CD4-positive, alpha-beta memory T cell (primary cell): ENCODE measurements at regions of chr4 and their contacts with region 1.

Region 1: GRCh38 chr4:40056716-40057585 is at the start of gene N4BP2:
- DNase-seq: peak; percentile 60 to 78 (median 75)
- H3K4me3 ChIP-seq: peak within 1 kb of the TSS; percentile 82 to 100
- H3K4me3 Mint-ChIP-seq: peak within 1 kb of the TSS; percentile 93 to 99 (median 97)
- H3K27ac ChIP-seq: peak within 1 kb of the TSS; percentile 75
- H3K27ac Mint-ChIP-seq: peak within 1 kb of the TSS; percentile 93 to 99 (median 97)
- H3K4me1 ChIP-seq: peaks cover 36% of the 10 kb centered on the region
- H3K4me1 Mint-ChIP-seq: peaks cover 18 to 48% (median 32%) of the 10 kb centered on the region in 4 donors
- H3K27me3 ChIP-seq: no peaks in the 10 kb centered on the region
- H3K27me3 Mint-ChIP-seq: no peaks in the 10 kb centered on the region
- total RNA-seq, gene N4BP2: 15.0 to 16.7 TPM

Region 2: DNA sequence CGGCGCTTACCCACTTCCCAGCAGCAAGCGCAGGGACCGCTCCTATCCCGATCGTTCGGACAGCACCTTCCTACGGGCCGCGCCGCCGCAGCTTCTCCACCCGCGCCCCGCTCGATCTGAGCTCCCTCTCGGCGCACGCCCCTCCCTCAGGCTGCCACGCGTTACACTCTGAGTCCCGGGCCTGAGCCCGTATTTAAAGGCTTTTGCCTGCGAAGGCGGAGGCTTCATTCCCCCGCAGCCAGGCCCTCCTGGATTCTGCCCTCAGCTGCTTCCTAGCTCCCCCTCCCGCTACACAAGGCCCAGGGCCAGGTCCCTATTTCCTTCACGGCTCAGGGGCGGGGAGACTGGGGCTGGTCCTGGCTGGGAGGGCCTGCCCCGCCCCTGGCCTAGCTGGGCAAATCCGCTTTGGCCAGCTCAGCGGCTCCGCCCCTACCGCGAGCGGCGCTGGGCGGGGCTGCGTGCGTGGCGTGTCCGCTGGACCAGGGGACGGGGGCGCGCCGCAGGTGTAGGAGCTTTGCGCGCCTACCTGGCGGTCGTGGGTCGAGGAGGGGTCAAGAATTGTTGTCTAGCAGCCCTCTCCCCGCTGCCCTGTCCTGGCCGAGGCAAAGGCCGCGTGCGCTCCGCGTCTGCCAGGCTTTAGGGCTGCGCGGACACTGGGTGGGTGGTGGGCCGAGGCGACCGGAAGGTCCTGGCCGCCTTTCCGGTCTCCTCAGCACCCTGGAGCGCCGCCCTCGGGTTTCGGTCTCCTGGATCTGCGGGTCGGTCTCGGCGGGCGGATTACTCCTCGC is 529.5 kb before region 1 on chr4 and contains the start of gene UGDH:
- CTCF ChIA-PET with region 1: no interaction called
- POLR2A ChIA-PET with region 1: interaction called, 5 read pairs
- intact Hi-C with region 1: loop called (anchors 5 kb)
- DNase-seq: peak; percentile 88 to 92 (median 90)
- H3K4me3 ChIP-seq: peak within 1 kb of the TSS; percentile 71 to 91
- H3K4me3 Mint-ChIP-seq: peak within 1 kb of the TSS; percentile 97 to 99 (median 98)
- H3K27ac ChIP-seq: peak within 1 kb of the TSS; percentile 69
- H3K27ac Mint-ChIP-seq: peak within 1 kb of the TSS; percentile 78 to 98 (median 96)
- H3K4me1 ChIP-seq: peaks cover 18% of the 10 kb centered on the region
- H3K4me1 Mint-ChIP-seq: peaks cover 10 to 25% (median 18%) of the 10 kb centered on the region in 4 donors
- H3K27me3 ChIP-seq: no peaks in the 10 kb centered on the region
- H3K27me3 Mint-ChIP-seq: no peaks in the 10 kb centered on the region
- total RNA-seq, gene UGDH: 21.6 to 26.5 TPM

Region 3: DNA sequence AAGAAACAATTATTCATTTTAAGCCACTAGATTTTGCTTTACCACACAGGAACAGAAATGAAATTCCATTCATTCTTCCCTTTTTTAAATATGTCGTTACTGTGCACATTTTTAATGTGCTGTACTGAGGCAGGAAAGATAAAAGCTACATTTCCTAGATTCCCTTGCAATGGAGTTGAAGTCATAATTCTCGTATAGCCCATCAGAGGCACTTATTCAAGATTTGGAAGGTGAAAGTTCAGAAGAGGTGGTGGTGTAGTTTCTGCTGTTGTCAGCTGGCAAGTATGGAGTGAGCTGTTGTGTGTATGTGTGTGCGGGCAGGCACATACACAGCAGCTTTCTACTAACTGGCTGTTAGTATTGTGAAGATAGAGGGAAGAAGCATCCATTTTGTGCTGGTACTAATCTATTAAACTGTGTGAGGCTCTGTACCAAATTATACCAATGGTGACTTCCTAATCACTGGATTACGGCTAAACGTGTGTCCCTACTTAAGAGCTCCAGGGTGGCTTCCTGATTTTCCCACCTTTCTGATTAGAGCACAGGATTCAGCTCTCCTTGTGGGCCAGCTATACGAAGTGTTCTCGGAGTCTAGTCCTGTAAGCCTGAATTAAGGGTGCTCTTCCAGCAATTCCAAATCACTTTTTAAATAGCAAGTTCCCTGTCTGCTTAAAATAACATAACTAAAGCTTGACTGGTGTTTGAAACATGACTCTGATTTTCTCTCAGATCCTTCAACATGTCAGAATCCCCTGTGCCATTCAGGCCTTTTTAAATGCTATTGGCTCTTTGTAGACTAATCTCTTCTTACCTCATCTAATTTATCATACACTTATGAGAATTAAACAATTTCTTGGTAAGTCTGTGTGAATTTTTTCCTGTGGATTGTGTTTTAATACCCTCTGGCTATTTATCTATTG is 123.0 kb before region 1 on chr4:
- CTCF ChIA-PET with region 1: no interaction called
- POLR2A ChIA-PET with region 1: no interaction called
- intact Hi-C with region 1: no loop called
- DNase-seq: no peak
- H3K4me3 ChIP-seq: no peak overlapping the region
- H3K4me3 Mint-ChIP-seq: peak overlapping the region in 7 of 8 donors; percentile 55 to 82 (median 69)
- H3K27ac ChIP-seq: peak overlapping the region; percentile 35
- H3K27ac Mint-ChIP-seq: peak overlapping the region; percentile 30 to 89 (median 85)
- H3K4me1 ChIP-seq: peaks cover 58% of the 10 kb centered on the region
- H3K4me1 Mint-ChIP-seq: peaks cover 50 to 76% (median 62%) of the 10 kb centered on the region in 4 donors
- H3K27me3 ChIP-seq: no peaks in the 10 kb centered on the region
- H3K27me3 Mint-ChIP-seq: no peaks in the 10 kb centered on the region

Region 4: GRCh38 chr4:40121515-40121914 is 64.6 kb after region 1 on chr4:
- CTCF ChIA-PET with region 1: interaction called, 8 read pairs
- POLR2A ChIA-PET with region 1: interaction called, 4 read pairs
- intact Hi-C with region 1: loop called (anchors 5 kb)
- DNase-seq: peak in 1 of 5 donors; percentile 35
- H3K4me3 ChIP-seq: no peak overlapping the region
- H3K4me3 Mint-ChIP-seq: peak overlapping the region in 1 of 8 donors; percentile 29
- H3K27ac ChIP-seq: no peak overlapping the region
- H3K27ac Mint-ChIP-seq: peak overlapping the region in 5 of 7 donors; percentile 12 to 77 (median 50)
- H3K4me1 ChIP-seq: peaks cover 46% of the 10 kb centered on the region
- H3K4me1 Mint-ChIP-seq: peaks cover 21 to 43% (median 33%) of the 10 kb centered on the region in 4 donors
- H3K27me3 ChIP-seq: no peaks in the 10 kb centered on the region
- H3K27me3 Mint-ChIP-seq: no peaks in the 10 kb centered on the region

Region 5: DNA sequence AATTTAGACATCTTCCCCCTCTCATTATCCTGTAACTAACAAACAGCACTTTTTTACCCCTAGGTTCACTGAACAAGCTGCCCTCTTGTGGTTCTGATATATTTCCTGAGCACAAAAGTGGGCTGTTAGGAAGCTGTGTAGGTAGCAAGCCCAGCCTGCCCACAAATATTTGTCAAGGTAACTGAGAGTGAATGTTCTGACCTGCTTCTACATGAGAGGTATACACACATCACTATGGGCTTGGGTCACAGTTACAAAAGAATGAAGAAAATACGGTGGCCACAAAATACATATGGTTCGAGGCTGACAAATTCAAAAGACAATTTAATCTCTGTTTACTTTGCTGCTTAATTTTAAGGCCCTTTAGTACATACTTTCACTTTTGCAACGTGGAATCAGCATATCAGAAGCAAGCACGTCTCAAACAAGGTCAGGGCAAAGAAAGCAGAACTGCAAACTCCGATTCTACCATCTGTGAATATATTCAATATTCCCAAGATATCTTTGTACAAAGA is 494.1 kb after region 1 on chr4:
- CTCF ChIA-PET with region 1: interaction called, 3 read pairs
- POLR2A ChIA-PET with region 1: no interaction called
- intact Hi-C with region 1: loop called (anchors 1 kb)
- DNase-seq: peak in 4 of 5 donors; percentile 31 to 57 (median 50)
- H3K4me3 ChIP-seq: peak overlapping the region; percentile 8 to 12
- H3K4me3 Mint-ChIP-seq: peak overlapping the region; percentile 68 to 87 (median 82)
- H3K27ac ChIP-seq: peak overlapping the region; percentile 32
- H3K27ac Mint-ChIP-seq: peak overlapping the region; percentile 67 to 97 (median 87)
- H3K4me1 ChIP-seq: no peaks in the 10 kb centered on the region
- H3K4me1 Mint-ChIP-seq: peaks cover 7 to 26% (median 10%) of the 10 kb centered on the region in 4 donors
- H3K27me3 ChIP-seq: no peaks in the 10 kb centered on the region
- H3K27me3 Mint-ChIP-seq: no peaks in the 10 kb centered on the region